A549 (cell line): ENCODE measurements at regions of chr10 and their contacts with region 1.

Region 1: DNA sequence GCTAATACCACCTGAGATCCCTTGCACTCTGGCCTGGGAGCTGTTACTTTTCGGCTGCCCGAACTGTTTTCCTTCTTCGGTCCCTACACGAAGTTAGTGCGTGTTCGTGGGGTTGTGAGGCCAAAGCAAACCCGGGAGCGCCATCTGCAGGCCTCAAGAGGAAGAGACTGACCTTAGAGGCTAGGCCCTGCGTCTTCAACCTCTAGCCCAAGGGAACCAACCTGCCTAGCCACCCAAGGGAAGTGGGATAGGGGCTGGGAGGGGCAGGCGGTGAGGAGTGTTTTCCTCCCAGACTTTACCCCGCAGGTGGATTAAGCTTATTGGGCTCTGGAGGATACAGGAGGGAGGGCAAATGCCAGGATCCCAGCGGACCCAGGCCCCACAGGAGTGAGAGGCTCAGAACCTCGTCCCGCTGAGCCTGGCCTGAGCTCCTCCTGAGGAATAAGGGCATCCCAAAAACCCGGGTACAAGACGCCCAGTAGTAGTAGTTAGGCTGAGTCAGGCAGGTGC is 1.7 kb upstream of the PAX2 start:
- DNase-seq: peak; percentile 84 to 85
- ATAC-seq: peak; percentile 54 to 75
- H3K4me3 ChIP-seq: peak overlapping the region; percentile 50
- H3K27ac ChIP-seq: peak overlapping the region in 1 of 2 experiments; percentile 8; a peak in 1 of 6 replicates
- H3K4me1 ChIP-seq: peaks cover 29% of the 10 kb centered on the region
- CTCF ChIP-seq: peak; percentile 88
- EP300 ChIP-seq: no peak
- POLR2A ChIP-seq: no peak
- RAD21 ChIP-seq: peak; percentile 90 to 93

Region 2: GRCh38 chr10:100569618-100570473 is 173.8 kb before region 1 on chr10:
- CTCF ChIA-PET with region 1: interaction called, 127 read pairs
- POLR2A ChIA-PET with region 1: no interaction called
- DNase-seq: no peak
- ATAC-seq: no peak
- H3K4me3 ChIP-seq: no peak overlapping the region
- H3K27ac ChIP-seq: no peak overlapping the region
- H3K4me1 ChIP-seq: no peaks in the 10 kb centered on the region
- CTCF ChIP-seq: no peak
- EP300 ChIP-seq: no peak
- POLR2A ChIP-seq: no peak
- RAD21 ChIP-seq: no peak

Region 3: GRCh38 chr10:100664316-100665149 is 79.1 kb before region 1 on chr10:
- CTCF ChIA-PET with region 1: interaction called, 66 read pairs
- POLR2A ChIA-PET with region 1: no interaction called
- DNase-seq: no peak
- ATAC-seq: no peak
- H3K4me3 ChIP-seq: no peak overlapping the region
- H3K27ac ChIP-seq: no peak overlapping the region
- H3K4me1 ChIP-seq: no peaks in the 10 kb centered on the region
- CTCF ChIP-seq: no peak
- EP300 ChIP-seq: no peak
- POLR2A ChIP-seq: no peak
- RAD21 ChIP-seq: no peak

Region 4: GRCh38 chr10:100683545-100684300 is 60.0 kb before region 1 on chr10:
- CTCF ChIA-PET with region 1: interaction called, 44 read pairs
- POLR2A ChIA-PET with region 1: no interaction called
- DNase-seq: no peak
- ATAC-seq: no peak
- H3K4me3 ChIP-seq: no peak overlapping the region
- H3K27ac ChIP-seq: no peak overlapping the region
- H3K4me1 ChIP-seq: peaks cover 4% of the 10 kb centered on the region; the same call in 1 of the 3 replicates
- CTCF ChIP-seq: no peak
- EP300 ChIP-seq: no peak
- POLR2A ChIP-seq: no peak
- RAD21 ChIP-seq: no peak

Region 5: DNA sequence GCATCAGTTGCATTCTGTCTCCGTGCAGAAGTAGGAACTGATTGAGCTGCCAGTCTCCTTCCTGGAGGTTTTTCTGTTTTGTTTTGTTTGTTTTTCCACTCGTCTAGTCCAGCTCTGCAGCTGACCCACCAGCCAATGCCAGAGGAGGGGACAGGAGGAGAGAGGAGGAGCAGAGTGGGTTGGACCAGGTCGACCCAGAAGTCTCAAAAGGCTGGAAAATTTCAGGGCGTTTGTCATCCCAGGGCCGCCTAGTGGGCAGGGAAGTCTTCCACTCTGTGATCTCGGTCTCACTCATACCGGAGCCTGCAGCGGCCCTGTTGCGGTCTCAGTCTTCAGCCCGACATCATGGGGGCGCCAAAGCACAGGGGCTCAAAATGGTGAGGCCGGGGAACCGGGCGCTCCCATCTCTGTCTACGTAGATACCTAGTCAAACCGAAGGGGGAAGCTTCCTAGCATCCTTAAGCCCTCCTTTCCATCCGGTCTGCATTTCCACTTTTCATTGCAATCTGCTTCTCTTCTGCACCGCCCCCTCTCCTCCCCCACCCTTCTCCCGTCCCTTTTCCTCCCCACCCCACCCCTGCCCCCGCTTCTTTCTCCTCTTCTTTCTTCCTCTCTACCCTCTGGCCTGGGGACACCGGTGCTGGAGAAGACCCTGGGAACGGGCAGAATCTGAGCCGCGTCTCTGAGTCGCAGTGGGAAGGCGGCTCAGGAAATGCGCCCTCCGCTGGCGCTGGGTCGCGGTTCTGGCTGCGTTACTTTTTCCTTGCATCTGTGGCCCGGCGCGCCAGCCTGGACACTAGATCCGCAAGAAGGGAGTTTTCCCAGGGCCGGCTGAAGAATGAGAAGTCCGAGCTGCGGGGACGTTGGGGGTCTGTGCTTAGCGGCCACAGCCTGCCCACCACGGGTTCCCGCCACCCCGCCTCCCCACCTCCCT is 14.5 kb before region 1 on chr10:
- CTCF ChIA-PET with region 1: interaction called, 129 read pairs
- POLR2A ChIA-PET with region 1: interaction called, 6 read pairs
- DNase-seq: peak; percentile 90 to 93
- ATAC-seq: peak; percentile 79 to 88
- H3K4me3 ChIP-seq: peak overlapping the region; percentile 46
- H3K27ac ChIP-seq: peak overlapping the region; percentile 80 to 93
- H3K4me1 ChIP-seq: peaks cover 21% of the 10 kb centered on the region
- CTCF ChIP-seq: peak; percentile 85
- EP300 ChIP-seq: no peak
- POLR2A ChIP-seq: peak; percentile 52
- RAD21 ChIP-seq: peak; percentile 62 to 73

Region 6: GRCh38 chr10:100827819-100828737 is 84.4 kb after region 1 on chr10:
- CTCF ChIA-PET with region 1: interaction called, 14 read pairs
- POLR2A ChIA-PET with region 1: no interaction called
- DNase-seq: peak; percentile 43 to 75
- ATAC-seq: peak; percentile 72 to 78
- H3K4me3 ChIP-seq: peak overlapping the region; percentile 50
- H3K27ac ChIP-seq: peak overlapping the region; percentile 34 to 80; a peak in 5 of 6 replicates
- H3K4me1 ChIP-seq: 0 out of 3 replicates have a peak, but pooled peaks cover 5% of the 10 kb centered on the region
- CTCF ChIP-seq: peak; percentile 30
- EP300 ChIP-seq: no peak
- POLR2A ChIP-seq: no peak
- RAD21 ChIP-seq: peak in 1 of 2 experiments; percentile 32; a peak in 1 of 5 replicates

Region 7: GRCh38 chr10:100890673-100891317 is 147.1 kb after region 1 on chr10:
- CTCF ChIA-PET with region 1: interaction called, 12 read pairs
- POLR2A ChIA-PET with region 1: interaction called, 4 read pairs
- DNase-seq: peak; percentile 74 to 75
- ATAC-seq: peak; percentile 88 to 93
- H3K4me3 ChIP-seq: no peak overlapping the region
- H3K27ac ChIP-seq: peak overlapping the region; percentile 70 to 85
- H3K4me1 ChIP-seq: peaks cover 24% of the 10 kb centered on the region
- CTCF ChIP-seq: no peak
- EP300 ChIP-seq: peak in 1 of 2 experiments; percentile 16; a peak in 1 of 5 replicates
- POLR2A ChIP-seq: no peak
- RAD21 ChIP-seq: no peak

Region 8: GRCh38 chr10:101031128-101031795 is 287.6 kb after region 1 on chr10 and contains the starts of genes PDZD7 and SFXN3:
- CTCF ChIA-PET with region 1: no interaction called
- POLR2A ChIA-PET with region 1: no interaction called
- DNase-seq: peak; percentile 92 to 95
- ATAC-seq: peak; percentile 80 to 93
- H3K4me3 ChIP-seq: peak within 1 kb of the TSS; percentile 77
- H3K27ac ChIP-seq: peak within 1 kb of the TSS; percentile 75 to 92
- H3K4me1 ChIP-seq: peaks cover 27% of the 10 kb centered on the region
- CTCF ChIP-seq: no peak
- EP300 ChIP-seq: no peak
- POLR2A ChIP-seq: peak; percentile 27
- RAD21 ChIP-seq: no peak
- polyA plus RNA-seq, gene PDZD7: 0.20 and 0.21 TPM in 2 replicates
- polyA plus RNA-seq, gene SFXN3: 33.7 and 42.1 TPM in 2 replicates